Mammary epithelial cell (primary cell): ENCODE measurements at regions of chr11 and their contacts with region 1.

Region 1: DNA sequence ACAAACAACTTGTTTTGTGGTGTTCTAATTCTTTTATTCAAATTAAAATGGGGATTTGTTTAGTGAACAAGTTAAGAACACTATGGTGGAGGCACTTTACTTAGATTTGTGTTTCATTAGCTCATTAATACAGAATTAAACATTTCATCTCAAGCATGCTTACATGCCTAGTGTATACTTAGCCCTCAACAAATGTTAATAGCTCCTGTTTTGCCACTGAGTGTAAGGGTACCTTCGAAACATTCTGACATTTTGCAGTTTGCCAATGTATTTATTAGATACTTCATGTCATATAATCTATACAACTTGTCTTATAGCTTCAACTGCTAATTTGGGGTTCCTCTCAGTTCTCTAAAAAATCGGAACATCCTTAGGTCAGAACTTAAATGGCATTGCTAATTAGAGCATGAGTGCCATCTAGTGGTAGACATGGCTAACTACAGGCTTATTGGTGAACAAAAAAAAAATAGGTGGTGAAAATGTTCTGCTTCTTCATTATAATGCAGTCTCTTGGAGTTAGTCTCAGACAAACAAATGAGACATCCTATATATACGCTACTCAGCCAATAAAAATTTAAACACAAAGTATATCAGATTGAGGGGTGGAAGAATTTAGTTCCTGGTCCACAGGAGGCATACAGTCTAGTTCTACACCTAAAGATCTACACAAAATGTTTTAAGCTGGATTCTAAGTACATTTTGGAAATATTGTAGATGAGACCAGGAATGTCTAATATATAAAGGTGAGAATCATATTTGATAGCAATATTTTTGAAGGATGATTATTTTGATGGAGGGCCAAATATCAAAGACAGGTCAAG is 4.9 kb upstream of the CNTN5 start:
- DNase-seq: peak; percentile 14
- H3K4me3 ChIP-seq: no peak overlapping the region
- H3K27ac ChIP-seq: no peak overlapping the region
- H3K4me1 ChIP-seq: no peaks in the 10 kb centered on the region
- H3K27me3 ChIP-seq: peaks cover 3% of the 10 kb centered on the region
- CTCF ChIP-seq: peak; percentile 87 to 93

Region 2: DNA sequence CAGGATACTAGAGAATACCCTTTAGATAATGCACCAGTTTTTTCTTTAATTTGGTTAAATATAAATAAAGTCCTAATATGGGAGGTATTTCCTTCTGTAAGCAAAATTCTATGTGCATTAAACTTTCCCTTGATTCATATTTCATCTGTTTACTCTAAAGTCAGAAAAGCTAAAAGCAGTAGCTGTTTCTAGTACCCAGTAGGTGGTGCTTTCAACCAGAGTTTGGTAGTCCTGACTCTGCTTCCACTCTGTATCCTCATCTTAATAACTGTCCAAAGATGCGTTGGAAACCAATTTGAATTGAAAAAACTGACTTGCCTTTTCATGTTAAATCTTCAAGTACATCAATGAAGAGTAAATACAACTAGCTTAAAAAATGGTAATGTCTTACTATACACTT is 1560.9 kb before region 1 on chr11:
- CTCF ChIA-PET with region 1: no interaction called
- dilution Hi-C with region 1: no loop called
- in situ Hi-C with region 1: no loop called
- intact Hi-C with region 1: loop called (anchors 2 kb)
- DNase-seq: no peak
- H3K4me3 ChIP-seq: no peak overlapping the region
- H3K27ac ChIP-seq: no peak overlapping the region
- H3K4me1 ChIP-seq: no peaks in the 10 kb centered on the region
- H3K27me3 ChIP-seq: no peaks in the 10 kb centered on the region
- CTCF ChIP-seq: peak; percentile 24 to 44

Region 3: GRCh38 chr11:97883086-97883485 is 1132.8 kb before region 1 on chr11:
- CTCF ChIA-PET with region 1: no interaction called
- dilution Hi-C with region 1: no loop called
- in situ Hi-C with region 1: no loop called
- intact Hi-C with region 1: no loop called
- DNase-seq: no peak
- H3K4me3 ChIP-seq: no peak overlapping the region
- H3K27ac ChIP-seq: no peak overlapping the region
- H3K4me1 ChIP-seq: no peaks in the 10 kb centered on the region
- H3K27me3 ChIP-seq: peaks cover 1% of the 10 kb centered on the region
- CTCF ChIP-seq: no peak

Region 4: GRCh38 chr11:97943493-97943892 is 1072.4 kb before region 1 on chr11:
- CTCF ChIA-PET with region 1: no interaction called
- dilution Hi-C with region 1: no loop called
- in situ Hi-C with region 1: no loop called
- intact Hi-C with region 1: loop called (anchors 10 kb)
- DNase-seq: no peak
- H3K4me3 ChIP-seq: no peak overlapping the region
- H3K27ac ChIP-seq: no peak overlapping the region
- H3K4me1 ChIP-seq: no peaks in the 10 kb centered on the region
- H3K27me3 ChIP-seq: no peaks in the 10 kb centered on the region
- CTCF ChIP-seq: no peak